Activated CD4-positive, alpha-beta T cell treated with anti-CD3 and anti-CD28 coated beads for 36 hours (primary cell): ENCODE measurements at regions of chr20 and their contacts with region 1.

Region 1: DNA sequence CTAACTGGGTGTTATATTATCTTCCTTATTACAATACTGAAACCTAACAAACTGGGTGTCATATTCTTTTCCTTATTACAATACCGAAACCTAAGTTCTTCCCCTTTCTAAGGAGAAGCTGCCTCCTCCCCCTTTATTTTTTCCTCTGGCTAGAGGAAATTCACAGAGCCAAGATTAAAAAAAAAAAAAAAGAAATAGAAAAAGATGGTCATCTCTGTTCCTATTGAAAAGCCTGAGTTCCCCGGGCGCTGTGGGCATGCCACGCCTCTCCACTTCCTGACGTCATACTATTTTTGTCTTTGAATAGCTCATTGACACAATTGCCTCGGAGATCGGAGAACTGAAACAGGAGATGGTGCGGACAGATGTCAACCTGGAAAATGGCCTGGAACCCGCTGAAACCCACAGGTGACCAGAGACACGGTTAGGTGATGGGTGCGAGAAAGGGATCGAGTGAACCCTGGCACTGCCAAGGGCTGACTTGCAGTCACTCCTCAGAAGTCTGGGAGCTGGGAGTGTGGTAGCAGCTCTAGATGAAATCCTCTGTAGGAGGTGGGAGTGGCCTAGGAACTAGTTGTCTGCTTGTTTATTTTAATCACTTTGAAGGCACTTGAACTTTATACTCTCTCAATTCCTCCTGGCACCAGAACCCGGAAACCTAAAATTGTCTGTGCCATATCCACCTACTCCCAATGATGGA is 82.2 kb upstream of the NAA20 start:
- DNase-seq: peak; percentile 23
- ATAC-seq: no peak
- H3K4me3 Mint-ChIP-seq: no peak overlapping the region
- H3K27ac Mint-ChIP-seq: no peak overlapping the region
- H3K4me1 Mint-ChIP-seq: peaks cover 29% of the 10 kb centered on the region
- H3K27me3 Mint-ChIP-seq: peaks cover 35% of the 10 kb centered on the region

Region 2: DNA sequence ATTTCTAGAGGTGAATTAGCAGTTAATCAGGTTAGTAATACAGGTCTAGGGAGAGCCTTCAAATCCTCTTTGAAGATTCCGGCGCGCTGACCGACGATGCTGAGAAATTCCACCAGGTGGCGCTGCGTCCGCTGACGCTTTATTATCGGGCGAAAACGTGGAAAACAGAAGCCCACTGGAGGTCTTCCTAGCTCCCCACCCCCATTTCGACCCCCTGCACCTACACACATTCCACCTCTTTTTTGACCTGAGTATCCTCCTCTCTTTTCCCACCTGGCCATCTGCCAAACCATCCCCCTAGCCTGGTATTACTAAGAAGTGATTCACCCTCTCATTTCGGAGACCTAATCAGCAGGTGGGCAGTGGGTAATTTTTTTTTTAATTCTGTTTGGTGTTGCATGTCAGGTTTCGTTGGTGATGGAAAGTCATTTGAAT is 242.2 kb before region 1 on chr20:
- CTCF ChIA-PET with region 1: no interaction called
- POLR2A ChIA-PET with region 1: no interaction called
- intact Hi-C with region 1: loop called in 1 of 2 experiments (anchors 5 kb)
- DNase-seq: peak; percentile 68
- ATAC-seq: peak; percentile 42
- H3K4me3 Mint-ChIP-seq: no peak overlapping the region
- H3K27ac Mint-ChIP-seq: no peak overlapping the region
- H3K4me1 Mint-ChIP-seq: peaks cover 3% of the 10 kb centered on the region
- H3K27me3 Mint-ChIP-seq: peaks cover 22% of the 10 kb centered on the region

Region 3: DNA sequence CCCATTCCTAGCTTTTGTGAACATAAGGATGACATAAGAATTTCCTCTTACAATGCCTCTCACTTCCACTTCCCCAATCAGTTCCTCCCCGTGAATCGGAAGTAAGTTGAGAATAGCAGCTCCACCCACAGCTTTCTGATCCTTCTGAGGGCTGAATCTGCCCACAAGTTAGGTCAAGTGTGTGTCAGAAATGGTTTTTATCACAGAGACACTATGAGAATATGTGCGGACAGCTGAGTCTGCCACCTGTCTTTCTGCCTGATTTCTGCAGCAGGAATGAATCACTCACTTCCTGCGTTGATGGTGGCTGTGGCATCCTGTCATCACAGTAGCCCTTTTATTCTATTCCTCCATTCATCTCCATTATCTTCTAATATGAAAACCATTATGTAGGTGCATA is 106.7 kb before region 1 on chr20:
- CTCF ChIA-PET with region 1: no interaction called
- POLR2A ChIA-PET with region 1: no interaction called
- intact Hi-C with region 1: loop called in 1 of 2 experiments (anchors 5 kb)
- DNase-seq: peak; percentile 58
- ATAC-seq: peak; percentile 95
- H3K4me3 Mint-ChIP-seq: no peak overlapping the region
- H3K27ac Mint-ChIP-seq: no peak overlapping the region
- H3K4me1 Mint-ChIP-seq: peaks cover 15% of the 10 kb centered on the region
- H3K27me3 Mint-ChIP-seq: peaks cover 7% of the 10 kb centered on the region

Region 4: GRCh38 chr20:20017001-20017843 is 82.3 kb after region 1 on chr20 and contains the start of gene NAA20:
- CTCF ChIA-PET with region 1: interaction called, 3 read pairs
- POLR2A ChIA-PET with region 1: no interaction called
- intact Hi-C with region 1: loop called (anchors 1 to 2 kb)
- DNase-seq: peak; percentile 96
- ATAC-seq: peak; percentile 98
- H3K4me3 Mint-ChIP-seq: peak within 1 kb of the TSS; percentile 93
- H3K27ac Mint-ChIP-seq: peak within 1 kb of the TSS; percentile 88
- H3K4me1 Mint-ChIP-seq: peaks cover 54% of the 10 kb centered on the region
- H3K27me3 Mint-ChIP-seq: no peaks in the 10 kb centered on the region
- total RNA-seq, gene NAA20: 58.6 to 88.7 TPM